Calu3 (cell line): ENCODE measurements at regions of chr2 and their contacts with region 1.

Region 1: DNA sequence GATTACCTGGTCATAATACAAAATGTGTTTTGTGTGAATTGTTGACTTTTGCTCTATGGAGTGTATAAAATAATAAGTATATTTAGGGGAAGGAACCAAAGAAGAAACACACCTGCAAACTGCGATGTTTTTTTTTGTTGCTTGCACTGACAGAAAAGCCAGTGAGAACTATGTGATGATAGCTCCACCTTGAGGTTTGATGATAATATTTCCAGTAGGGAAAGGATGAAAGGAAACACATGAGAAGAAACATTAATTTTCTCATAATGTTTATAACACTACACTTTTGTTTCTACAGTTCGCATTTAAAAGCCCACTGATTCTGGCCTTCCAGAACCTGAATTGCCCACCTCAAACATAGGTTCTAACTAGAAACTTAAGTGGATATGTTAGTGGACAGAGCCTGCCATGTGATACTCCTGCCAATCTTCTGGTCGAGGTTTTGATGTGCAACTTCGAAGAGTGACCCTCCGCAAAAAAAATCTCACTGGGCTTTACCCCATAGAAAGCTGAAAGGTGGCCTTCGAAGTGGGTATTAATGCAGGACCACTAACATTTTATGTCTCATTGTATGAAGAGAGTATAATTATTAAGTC is 476.4 kb upstream of the SPHKAP start:
- DNase-seq: peak; percentile 29
- H3K4me3 Mint-ChIP-seq: no peak overlapping the region
- H3K27ac Mint-ChIP-seq: no peak overlapping the region
- H3K4me1 Mint-ChIP-seq: peaks cover 19% of the 10 kb centered on the region
- H3K27me3 Mint-ChIP-seq: no peaks in the 10 kb centered on the region
- CTCF ChIP-seq: no peak

Region 2: DNA sequence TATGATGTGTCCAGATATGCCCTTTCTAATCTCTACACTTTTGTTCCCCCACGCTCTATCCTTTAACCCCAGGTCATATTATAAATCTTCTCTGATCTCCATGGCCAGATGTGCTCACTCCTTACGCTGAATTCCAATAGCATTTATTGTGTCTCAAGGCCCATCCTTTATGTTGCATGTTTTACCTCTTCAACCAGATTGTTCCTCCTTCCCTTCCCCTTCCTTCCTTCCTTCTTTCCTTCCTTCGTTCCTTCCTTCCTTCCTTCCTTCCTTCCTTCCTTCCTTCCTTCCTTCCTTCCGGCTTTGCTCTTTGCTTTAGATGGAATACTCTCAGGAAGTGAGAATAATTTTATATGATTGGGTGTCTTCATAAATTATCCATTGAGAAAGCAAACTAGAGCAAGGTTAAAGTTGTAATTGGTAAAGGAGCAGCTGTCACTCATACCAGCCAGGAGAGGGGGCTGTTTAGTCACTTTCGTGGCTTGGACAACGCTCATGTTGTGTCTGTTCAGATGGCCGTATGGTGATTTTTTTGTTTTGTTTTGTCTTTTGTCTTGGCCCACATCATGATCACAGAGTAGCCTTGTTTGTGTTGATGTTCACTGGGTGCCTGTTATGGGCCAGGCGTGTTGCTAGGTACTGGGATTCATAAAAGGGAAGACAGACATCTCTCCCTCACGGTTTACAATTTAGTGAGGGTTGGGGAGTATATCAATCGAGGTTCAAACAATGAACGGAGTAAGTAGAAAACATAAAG is 718.5 kb before region 1 on chr2:
- CTCF ChIA-PET with region 1: no interaction called
- intact Hi-C with region 1: loop called (anchors 1 kb)
- DNase-seq: peak; percentile 45
- H3K4me3 Mint-ChIP-seq: no peak overlapping the region
- H3K27ac Mint-ChIP-seq: no peak overlapping the region
- H3K4me1 Mint-ChIP-seq: no peaks in the 10 kb centered on the region
- H3K27me3 Mint-ChIP-seq: no peaks in the 10 kb centered on the region
- CTCF ChIP-seq: peak; percentile 59

Region 3: GRCh38 chr2:228318218-228318617 is 339.7 kb before region 1 on chr2:
- CTCF ChIA-PET with region 1: no interaction called
- intact Hi-C with region 1: loop called (anchors 1 kb)
- DNase-seq: peak; percentile 53
- H3K4me3 Mint-ChIP-seq: no peak overlapping the region
- H3K27ac Mint-ChIP-seq: no peak overlapping the region
- H3K4me1 Mint-ChIP-seq: no peaks in the 10 kb centered on the region
- H3K27me3 Mint-ChIP-seq: no peaks in the 10 kb centered on the region
- CTCF ChIP-seq: peak; percentile 71

Region 4: GRCh38 chr2:229050133-229050532 is 392.2 kb after region 1 on chr2:
- CTCF ChIA-PET with region 1: no interaction called
- intact Hi-C with region 1: no loop called
- DNase-seq: no peak
- H3K4me3 Mint-ChIP-seq: no peak overlapping the region
- H3K27ac Mint-ChIP-seq: no peak overlapping the region
- H3K4me1 Mint-ChIP-seq: no peaks in the 10 kb centered on the region
- H3K27me3 Mint-ChIP-seq: no peaks in the 10 kb centered on the region
- CTCF ChIP-seq: no peak